ENCODE measurements at regions of chr1 and their contacts with region 1.

Region 1: DNA sequence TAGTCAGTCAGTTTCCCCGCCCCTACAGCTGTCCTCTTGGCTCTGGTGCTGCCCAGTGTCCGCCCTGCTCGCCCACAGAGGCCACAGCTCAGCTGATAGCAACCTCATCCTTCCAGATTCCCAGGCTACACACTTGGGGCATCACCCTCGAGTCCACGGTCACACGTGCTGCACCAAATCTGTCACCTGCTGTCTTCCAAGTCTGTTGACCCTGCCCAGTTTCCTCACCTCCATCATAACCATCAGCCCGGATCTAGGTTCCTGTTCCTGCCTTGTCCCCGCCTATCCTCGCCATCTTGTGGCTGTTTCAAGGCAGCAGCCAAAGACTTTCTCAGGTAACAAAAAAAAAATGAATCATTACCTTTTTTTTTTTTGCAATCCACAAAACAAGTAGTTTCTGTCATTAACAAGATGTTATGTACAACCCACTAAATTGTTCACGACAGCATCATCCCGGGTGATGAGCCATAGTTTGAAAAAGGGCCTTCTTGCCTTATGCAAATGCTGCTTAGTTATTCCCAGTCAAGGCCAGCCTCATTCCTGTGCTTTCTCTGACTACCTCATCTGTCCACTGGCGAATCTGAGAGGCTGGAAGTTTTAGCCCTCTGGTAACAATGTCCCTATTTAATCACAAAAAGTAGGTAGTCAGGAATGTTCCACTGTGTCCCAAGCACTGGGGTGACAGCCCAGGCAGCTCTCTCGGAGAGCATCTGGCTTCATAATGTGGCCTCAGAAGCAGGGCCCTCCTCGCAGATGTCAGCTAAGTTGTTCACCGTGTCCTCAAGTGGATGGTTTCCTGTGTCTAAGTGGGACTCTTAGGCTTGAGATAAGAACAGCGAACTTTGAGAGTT is 4.9 kb upstream of the MIIP start:
- DNase-seq: no peak
- H3K4me3 ChIP-seq: no peak overlapping the region
- H3K27ac ChIP-seq: 0 out of 2 replicates have a peak overlapping the region, but pooled peaks have one; percentile 7
- H3K4me1 ChIP-seq: no peaks in the 10 kb centered on the region
- H3K27me3 ChIP-seq: no peaks in the 10 kb centered on the region
- CTCF ChIP-seq: peak; percentile 38 to 45 (median 44)
- EP300 ChIP-seq: no peak
- POLR2A ChIP-seq: no peak
- RAD21 ChIP-seq: peak in 1 of 2 experiments; percentile 45; a peak in 2 of 4 replicates

Region 2: DNA sequence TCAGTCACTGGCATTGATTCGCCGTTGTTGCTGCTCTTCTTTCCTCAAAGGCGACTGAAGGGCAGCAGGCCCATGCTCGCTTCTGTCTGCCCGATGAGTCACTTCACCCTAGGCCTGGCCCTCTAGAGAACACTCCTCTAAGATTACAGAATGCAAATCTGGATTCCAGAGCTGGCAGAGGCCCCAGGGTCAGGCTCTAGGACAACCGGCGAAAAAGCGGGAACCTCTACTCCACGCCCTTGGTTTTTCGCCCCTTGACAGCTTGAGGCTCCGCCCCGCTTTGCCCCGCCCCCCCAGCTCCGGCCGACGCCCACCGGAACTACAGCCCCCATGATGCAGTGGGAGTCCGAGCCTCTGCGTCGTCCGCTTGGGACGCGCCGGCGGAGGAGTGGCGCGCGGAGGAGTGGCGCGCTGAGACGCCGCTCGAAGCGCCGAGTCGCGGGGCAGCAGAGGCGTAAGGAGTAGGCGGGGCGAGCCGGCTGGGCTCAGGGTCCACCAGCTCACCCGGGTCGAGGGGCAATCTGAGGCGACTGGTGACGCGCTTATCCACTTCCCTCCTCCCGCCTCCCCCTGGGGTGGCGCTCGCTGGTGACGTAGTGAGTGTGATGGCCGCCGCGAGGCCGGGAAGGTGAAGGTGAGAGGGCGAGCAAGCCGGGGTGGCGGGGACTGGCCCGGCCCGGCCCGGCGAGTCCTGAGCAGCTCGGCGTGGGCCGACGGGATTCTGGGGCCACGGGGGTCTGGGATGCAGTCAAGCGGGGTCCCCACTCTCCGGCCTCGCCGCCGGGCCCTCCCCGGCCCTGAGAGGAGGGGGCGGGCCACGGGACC is 34.3 kb before region 1 on chr1 and contains the start of gene MFN2:
- CTCF ChIA-PET with region 1: interaction called, 3 read pairs
- POLR2A ChIA-PET with region 1: interaction called, 21 read pairs
- DNase-seq: peak; percentile 97
- H3K4me3 ChIP-seq: peak within 1 kb of the TSS; percentile 78 to 94 (median 84)
- H3K27ac ChIP-seq: peak within 1 kb of the TSS; percentile 96
- H3K4me1 ChIP-seq: peaks cover 0 to 5% (median 2%) of the 10 kb centered on the region in 4 experiments; a peak in 3 of 7 replicates
- H3K27me3 ChIP-seq: no peaks in the 10 kb centered on the region
- CTCF ChIP-seq: no peak
- EP300 ChIP-seq: 0 out of 3 replicates have a peak, but pooled peaks of 1 of the 2 experiments have one; percentile 6
- POLR2A ChIP-seq: peak; percentile 91 to 95
- RAD21 ChIP-seq: no peak
- total RNA-seq, gene MFN2: 58.2 and 62.5 TPM in 2 replicates

Region 3: DNA sequence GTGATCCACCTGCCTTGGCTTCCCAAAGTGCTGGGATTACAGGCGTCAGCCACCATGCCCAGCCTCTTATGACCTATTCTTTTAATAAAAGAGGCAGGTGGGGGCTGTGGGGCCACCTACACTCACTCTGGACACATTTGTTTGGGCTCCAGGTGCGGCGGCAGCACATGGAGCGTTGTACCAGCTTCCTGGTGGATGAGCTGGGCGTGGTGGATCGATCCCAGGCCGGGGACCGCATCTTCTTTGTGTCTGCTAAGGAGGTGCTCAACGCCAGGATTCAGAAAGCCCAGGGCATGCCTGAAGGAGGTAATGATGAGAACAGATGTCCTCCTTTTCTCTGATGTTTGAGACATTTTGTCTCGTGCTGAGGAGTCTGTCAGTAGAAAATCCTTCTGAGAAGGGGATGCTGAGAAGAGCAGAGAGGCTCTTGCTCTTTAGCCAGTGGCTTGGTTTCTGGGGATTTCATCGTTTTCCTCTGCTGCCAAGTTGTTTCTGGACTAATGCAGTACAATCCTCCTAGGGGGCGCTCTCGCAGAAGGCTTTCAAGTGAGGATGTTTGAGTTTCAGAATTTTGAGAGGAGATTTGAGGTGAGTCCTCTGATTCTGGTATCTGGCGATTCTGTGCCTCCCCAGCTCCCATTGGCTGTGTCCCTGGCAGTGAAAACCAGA is 13.0 kb before region 1 on chr1:
- CTCF ChIA-PET with region 1: interaction called, 26 read pairs
- POLR2A ChIA-PET with region 1: interaction called, 15 read pairs
- DNase-seq: peak in 1 of 2 experiments; percentile 83
- H3K4me3 ChIP-seq: no peak overlapping the region
- H3K27ac ChIP-seq: no peak overlapping the region
- H3K4me1 ChIP-seq: no peaks in the 10 kb centered on the region
- H3K27me3 ChIP-seq: no peaks in the 10 kb centered on the region
- CTCF ChIP-seq: peak; percentile 30 to 79 (median 74)
- EP300 ChIP-seq: no peak
- POLR2A ChIP-seq: no peak
- RAD21 ChIP-seq: peak; percentile 51 to 64

Region 4: GRCh38 chr1:12031039-12031980 is 16.9 kb after region 1 on chr1:
- CTCF ChIA-PET with region 1: interaction called, 16 read pairs
- POLR2A ChIA-PET with region 1: interaction called, 66 read pairs
- DNase-seq: peak in 1 of 2 experiments; percentile 73
- H3K4me3 ChIP-seq: no peak overlapping the region
- H3K27ac ChIP-seq: no peak overlapping the region
- H3K4me1 ChIP-seq: no peaks in the 10 kb centered on the region; a peak in 1 of 7 replicates
- H3K27me3 ChIP-seq: no peaks in the 10 kb centered on the region
- CTCF ChIP-seq: peak; percentile 68 to 73 (median 69)
- EP300 ChIP-seq: no peak
- POLR2A ChIP-seq: no peak
- RAD21 ChIP-seq: peak; percentile 67 to 73